ENCODE measurements at regions of chr5 and their contacts with region 1.

Region 1: GRCh38 chr5:168947212-168947868 is 353.6 kb downstream of the SLIT3 start:
- DNase-seq: peak; percentile 20
- ATAC-seq: peak; percentile 93
- H3K4me3 ChIP-seq: no peak overlapping the region
- H3K27ac ChIP-seq: no peak overlapping the region
- H3K4me1 ChIP-seq: no peaks in the 10 kb centered on the region
- H3K27me3 ChIP-seq: no peaks in the 10 kb centered on the region
- CTCF ChIP-seq: peak; percentile 90

Region 2: DNA sequence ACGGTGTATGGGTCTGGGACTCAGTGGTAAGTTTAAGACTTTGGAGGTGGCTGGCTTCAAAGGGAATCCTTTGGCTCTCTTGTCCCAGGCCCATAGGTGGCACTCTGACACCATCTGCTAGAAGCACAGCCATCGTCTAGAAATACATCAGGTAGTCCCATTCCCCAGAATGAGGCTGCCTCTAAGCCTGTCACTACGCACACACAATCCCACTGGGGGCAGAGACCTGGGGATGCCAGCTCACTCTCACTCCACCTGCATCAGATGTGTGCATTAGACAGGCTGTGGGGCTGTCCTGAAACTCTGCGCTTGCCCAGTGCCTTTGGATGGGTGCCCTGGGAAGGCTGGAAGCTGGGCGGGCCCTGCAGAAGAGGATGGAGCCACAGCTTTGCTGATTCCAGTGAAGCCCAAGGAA is 240.7 kb before region 1 on chr5:
- CTCF ChIA-PET with region 1: no interaction called
- POLR2A ChIA-PET with region 1: no interaction called
- in situ Hi-C with region 1: no loop called
- intact Hi-C with region 1: loop called (anchors 10 kb)
- DNase-seq: peak; percentile 20
- ATAC-seq: peak; percentile 94
- H3K4me3 ChIP-seq: no peak overlapping the region
- H3K27ac ChIP-seq: no peak overlapping the region
- H3K4me1 ChIP-seq: no peaks in the 10 kb centered on the region
- H3K27me3 ChIP-seq: no peaks in the 10 kb centered on the region
- CTCF ChIP-seq: peak; percentile 86

Region 3: GRCh38 chr5:168987543-168988300 is 40.4 kb after region 1 on chr5:
- CTCF ChIA-PET with region 1: no interaction called
- POLR2A ChIA-PET with region 1: no interaction called
- in situ Hi-C with region 1: no loop called
- intact Hi-C with region 1: no loop called
- DNase-seq: peak; percentile 57
- ATAC-seq: peak; percentile 84
- H3K4me3 ChIP-seq: peak overlapping the region in 1 of 2 experiments; percentile 2; a peak in 1 of 4 replicates
- H3K27ac ChIP-seq: peak overlapping the region; percentile 30; the same call in 1 of the 2 replicates
- H3K4me1 ChIP-seq: peaks cover 5% of the 10 kb centered on the region
- H3K27me3 ChIP-seq: no peaks in the 10 kb centered on the region
- CTCF ChIP-seq: peak; percentile 92

Measured in Panc1 (cell line).